HepG2 (cell line): ENCODE measurements at regions of chr10 and their contacts with region 1.

Region 1: GRCh38 chr10:12195603-12196506 is at the starts of genes CDC123 and NUDT5:
- DNase-seq: peak; percentile 81
- ATAC-seq: peak; percentile 96
- H3K4me3 ChIP-seq: peak within 1 kb of the TSS; percentile 87 to 94 (median 91)
- H3K27ac ChIP-seq: peak within 1 kb of the TSS; percentile 92
- H3K4me1 ChIP-seq: peaks cover 45% of the 10 kb centered on the region
- H3K27me3 ChIP-seq: no peaks in the 10 kb centered on the region; a peak in 1 of 5 replicates
- CTCF ChIP-seq: peak; percentile 31
- EP300 ChIP-seq: no peak
- POLR2A ChIP-seq: peak; percentile 73 to 75
- RAD21 ChIP-seq: peak; percentile 1; the same call in 1 of the 2 replicates
- total RNA-seq, gene CDC123: 153 and 217 TPM in 2 replicates
- total RNA-seq, gene NUDT5: 134 and 179 TPM in 2 replicates

Region 2: GRCh38 chr10:11863353-11864109 is 332.3 kb before region 1 on chr10:
- CTCF ChIA-PET with region 1: no interaction called
- POLR2A ChIA-PET with region 1: no interaction called
- in situ Hi-C with region 1: no loop called
- intact Hi-C with region 1: no loop called
- DNase-seq: no peak
- ATAC-seq: no peak
- H3K4me3 ChIP-seq: no peak overlapping the region
- H3K27ac ChIP-seq: no peak overlapping the region
- H3K4me1 ChIP-seq: no peaks in the 10 kb centered on the region
- H3K27me3 ChIP-seq: no peaks in the 10 kb centered on the region
- CTCF ChIP-seq: no peak
- EP300 ChIP-seq: no peak
- POLR2A ChIP-seq: no peak
- RAD21 ChIP-seq: no peak

Region 3: GRCh38 chr10:12129222-12130111 is 66.4 kb before region 1 on chr10 and contains the start of gene SEC61A2:
- CTCF ChIA-PET with region 1: no interaction called
- POLR2A ChIA-PET with region 1: no interaction called
- in situ Hi-C with region 1: no loop called
- intact Hi-C with region 1: loop called (anchors 1 kb)
- DNase-seq: peak; percentile 77
- ATAC-seq: peak; percentile 92
- H3K4me3 ChIP-seq: peak within 1 kb of the TSS; percentile 82 to 99 (median 87)
- H3K27ac ChIP-seq: peak within 1 kb of the TSS; percentile 93
- H3K4me1 ChIP-seq: peaks cover 19% of the 10 kb centered on the region
- H3K27me3 ChIP-seq: no peaks in the 10 kb centered on the region
- CTCF ChIP-seq: no peak
- EP300 ChIP-seq: no peak
- POLR2A ChIP-seq: peak; percentile 82 to 90
- RAD21 ChIP-seq: peak; percentile 30; the same call in 1 of the 2 replicates
- total RNA-seq, gene SEC61A2: 4.5 and 7.4 TPM in 2 replicates

Region 4: DNA sequence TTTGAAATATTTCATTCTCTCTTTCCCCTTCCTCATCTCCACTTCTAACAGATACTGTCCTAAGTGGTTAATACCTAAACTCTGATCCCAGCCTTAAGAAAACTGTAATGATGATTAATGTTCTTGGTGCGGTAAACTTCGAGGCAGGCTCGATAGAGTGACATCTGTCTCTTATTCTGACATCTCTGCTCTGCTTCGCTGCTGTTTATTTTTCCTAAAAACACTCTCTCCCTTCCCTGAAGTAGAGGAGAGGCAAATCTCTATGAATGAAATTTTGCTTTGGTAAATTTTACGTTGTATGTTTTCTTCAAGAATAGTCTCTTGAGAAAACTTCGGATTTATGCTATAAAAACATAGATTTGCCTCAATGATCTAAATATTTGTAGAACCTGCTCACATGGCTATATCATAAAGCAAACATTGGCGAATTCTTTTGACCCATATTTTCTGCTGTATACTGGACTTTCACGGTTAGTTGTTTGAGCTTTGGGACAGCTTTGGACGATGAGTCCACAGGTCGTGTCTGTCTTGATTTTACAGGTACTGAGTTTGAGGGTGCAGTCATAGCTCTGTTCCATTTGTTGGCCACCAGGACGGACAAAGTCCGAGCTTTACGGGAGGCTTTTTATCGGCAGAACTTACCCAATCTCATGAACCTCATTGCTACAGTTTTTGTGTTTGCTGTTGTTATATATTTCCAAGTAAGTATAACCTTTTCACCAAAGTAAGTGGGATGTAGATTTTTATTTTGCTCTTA is 39.3 kb before region 1 on chr10:
- CTCF ChIA-PET with region 1: no interaction called
- POLR2A ChIA-PET with region 1: no interaction called
- in situ Hi-C with region 1: no loop called
- intact Hi-C with region 1: loop called (anchors 2 kb)
- DNase-seq: peak; percentile 80
- ATAC-seq: peak; percentile 99
- H3K4me3 ChIP-seq: peak overlapping the region in 1 of 3 experiments; percentile 24; a peak in 1 of 6 replicates
- H3K27ac ChIP-seq: peak overlapping the region; percentile 71
- H3K4me1 ChIP-seq: peaks cover 26% of the 10 kb centered on the region
- H3K27me3 ChIP-seq: no peaks in the 10 kb centered on the region
- CTCF ChIP-seq: no peak
- EP300 ChIP-seq: no peak; a peak in 1 of 4 replicates
- POLR2A ChIP-seq: no peak
- RAD21 ChIP-seq: no peak

Region 5: GRCh38 chr10:12348870-12349628 is 153.2 kb after region 1 on chr10 and contains the start of gene CAMK1D:
- CTCF ChIA-PET with region 1: no interaction called
- POLR2A ChIA-PET with region 1: no interaction called
- in situ Hi-C with region 1: no loop called
- intact Hi-C with region 1: no loop called
- DNase-seq: no peak
- ATAC-seq: peak; percentile 68
- H3K4me3 ChIP-seq: peak within 1 kb of the TSS; percentile 45 to 62 (median 54)
- H3K27ac ChIP-seq: no peak within 1 kb of the TSS
- H3K4me1 ChIP-seq: peaks cover 20% of the 10 kb centered on the region
- H3K27me3 ChIP-seq: peaks cover 5 to 45% of the 10 kb centered on the region in 2 experiments; a peak in 4 of 5 replicates
- CTCF ChIP-seq: peak; percentile 33; the same call in 1 of the 2 replicates
- EP300 ChIP-seq: no peak
- POLR2A ChIP-seq: no peak
- RAD21 ChIP-seq: no peak
- total RNA-seq, gene CAMK1D: not detected in 2 replicates

Region 6: DNA sequence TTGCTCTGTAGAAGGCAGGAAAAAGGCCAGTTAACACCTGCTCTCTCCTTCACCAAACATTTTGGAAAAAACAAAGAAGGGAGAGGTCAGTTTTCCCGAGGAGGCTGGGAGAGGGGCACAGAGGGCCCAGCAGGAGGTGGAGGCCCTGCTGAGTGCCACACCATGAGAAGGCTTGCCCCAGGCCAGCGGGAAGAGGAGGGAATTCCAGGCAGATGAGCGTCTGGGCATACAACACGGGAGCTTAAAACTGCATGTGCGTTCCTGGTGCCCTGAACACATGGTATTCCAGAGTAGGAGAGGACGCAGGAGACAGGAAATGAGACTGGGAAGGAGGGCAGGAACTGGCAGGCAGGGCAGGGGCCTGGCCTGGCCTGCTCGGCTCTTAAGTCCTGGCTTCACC is 623.2 kb after region 1 on chr10:
- CTCF ChIA-PET with region 1: no interaction called
- POLR2A ChIA-PET with region 1: no interaction called
- in situ Hi-C with region 1: no loop called
- intact Hi-C with region 1: no loop called
- DNase-seq: no peak
- ATAC-seq: no peak
- H3K4me3 ChIP-seq: no peak overlapping the region
- H3K27ac ChIP-seq: no peak overlapping the region
- H3K4me1 ChIP-seq: no peaks in the 10 kb centered on the region
- H3K27me3 ChIP-seq: peaks cover 0 to 11% of the 10 kb centered on the region in 2 experiments; a peak in 1 of 5 replicates
- CTCF ChIP-seq: no peak
- EP300 ChIP-seq: no peak
- POLR2A ChIP-seq: no peak
- RAD21 ChIP-seq: no peak

Region 7: DNA sequence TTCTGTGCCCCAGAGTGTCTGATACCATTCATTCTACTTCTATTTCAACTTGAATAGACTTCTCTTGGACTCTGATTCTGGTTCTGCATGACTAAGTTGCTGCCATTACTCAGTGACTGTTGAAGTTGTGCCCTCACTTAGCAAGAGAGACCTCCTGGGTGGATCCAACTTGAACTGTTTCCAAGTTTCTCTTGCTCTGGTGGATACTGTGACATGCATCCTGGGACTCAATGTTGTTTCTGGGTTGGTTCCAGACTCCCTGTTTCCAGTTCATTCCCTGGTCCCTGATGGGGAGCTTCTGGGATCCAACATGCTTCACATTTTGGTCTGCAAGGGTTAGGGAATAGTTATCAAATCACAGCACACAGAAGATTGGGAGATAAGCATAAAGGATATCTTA is 1364.7 kb after region 1 on chr10:
- CTCF ChIA-PET with region 1: no interaction called
- POLR2A ChIA-PET with region 1: no interaction called
- in situ Hi-C with region 1: no loop called
- intact Hi-C with region 1: no loop called
- DNase-seq: no peak
- ATAC-seq: no peak
- H3K4me3 ChIP-seq: no peak overlapping the region
- H3K27ac ChIP-seq: no peak overlapping the region
- H3K4me1 ChIP-seq: no peaks in the 10 kb centered on the region
- H3K27me3 ChIP-seq: no peaks in the 10 kb centered on the region; a peak in 2 of 5 replicates
- CTCF ChIP-seq: no peak
- EP300 ChIP-seq: no peak
- POLR2A ChIP-seq: no peak
- RAD21 ChIP-seq: no peak